ENCODE measurements at regions of chrX and their contacts with region 1.

Region 1: DNA sequence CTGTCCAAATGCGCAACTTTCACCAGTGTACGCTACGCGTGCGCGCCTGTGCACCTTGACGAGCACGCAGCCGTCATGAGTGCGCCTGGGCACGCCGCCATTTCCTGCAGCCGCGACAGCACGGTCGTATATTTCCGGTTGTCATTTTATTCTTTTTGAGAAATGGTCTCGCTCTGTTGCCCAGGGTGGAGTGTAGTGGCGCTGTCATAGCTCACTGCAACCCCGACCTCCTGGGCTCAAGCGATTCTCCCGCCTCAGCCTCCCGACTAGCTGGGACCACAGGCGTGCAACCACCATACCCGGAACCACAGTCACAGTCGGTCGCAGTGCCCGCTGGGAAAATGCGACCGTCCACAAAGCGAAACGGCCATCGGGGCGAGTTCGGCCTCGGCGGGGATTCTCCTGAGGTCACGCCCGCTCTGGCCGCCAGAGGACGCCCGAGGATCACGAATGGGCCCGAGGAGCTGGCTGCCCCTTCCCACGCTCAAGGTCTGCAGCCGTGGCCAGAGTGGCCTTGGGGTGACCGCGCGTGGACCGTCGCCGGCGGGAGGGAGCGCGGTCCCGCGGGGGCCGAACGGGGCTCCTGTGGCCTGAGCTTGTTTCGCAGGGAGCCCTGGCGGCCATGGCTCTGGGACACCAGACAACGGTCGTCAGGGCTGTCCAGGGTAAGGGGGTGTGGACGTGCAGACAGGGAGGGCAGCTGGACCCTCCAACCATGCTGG is 23.7 kb upstream of the PNMA3 start:
- DNase-seq: peak; percentile 73
- H3K4me3 Mint-ChIP-seq: peak overlapping the region; percentile 81
- H3K27ac Mint-ChIP-seq: peak overlapping the region; percentile 87
- H3K4me1 Mint-ChIP-seq: peaks cover 8% of the 10 kb centered on the region
- H3K27me3 Mint-ChIP-seq: no peaks in the 10 kb centered on the region

Region 2: DNA sequence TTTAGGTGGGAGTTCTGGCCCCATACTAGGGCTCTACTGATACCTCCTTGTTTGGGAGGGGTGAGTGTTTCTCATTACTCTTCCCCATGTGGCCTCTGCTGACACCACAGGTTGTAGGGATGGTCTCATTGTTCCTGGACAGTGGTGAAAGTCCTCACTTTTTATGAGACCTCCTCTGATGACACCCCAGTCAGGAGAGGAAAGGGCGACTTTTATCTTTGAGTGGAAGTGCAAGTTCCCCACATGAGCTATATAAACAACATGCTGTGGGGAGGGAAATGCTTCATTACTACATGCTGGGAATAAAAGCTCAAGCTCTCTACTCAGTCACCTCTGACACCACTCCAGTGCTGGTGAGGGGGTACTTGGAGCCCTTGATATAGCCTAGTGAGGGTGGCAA is 233.6 kb before region 1 on chrX:
- CTCF ChIA-PET with region 1: no interaction called
- intact Hi-C with region 1: no loop called
- DNase-seq: no peak
- H3K4me3 Mint-ChIP-seq: no peak overlapping the region
- H3K27ac Mint-ChIP-seq: no peak overlapping the region
- H3K4me1 Mint-ChIP-seq: no peaks in the 10 kb centered on the region
- H3K27me3 Mint-ChIP-seq: no peaks in the 10 kb centered on the region

Region 3: GRCh38 chrX:152926279-152926678 is 106.3 kb before region 1 on chrX:
- CTCF ChIA-PET with region 1: no interaction called
- intact Hi-C with region 1: no loop called
- DNase-seq: peak; percentile 70
- H3K4me3 Mint-ChIP-seq: no peak overlapping the region
- H3K27ac Mint-ChIP-seq: no peak overlapping the region
- H3K4me1 Mint-ChIP-seq: peaks cover 6% of the 10 kb centered on the region
- H3K27me3 Mint-ChIP-seq: no peaks in the 10 kb centered on the region

Region 4: GRCh38 chrX:153370293-153371055 is 337.9 kb after region 1 on chrX:
- CTCF ChIA-PET with region 1: no interaction called
- intact Hi-C with region 1: loop called (anchors 5 kb)
- DNase-seq: no peak
- H3K4me3 Mint-ChIP-seq: no peak overlapping the region
- H3K27ac Mint-ChIP-seq: no peak overlapping the region
- H3K4me1 Mint-ChIP-seq: peaks cover 11% of the 10 kb centered on the region
- H3K27me3 Mint-ChIP-seq: no peaks in the 10 kb centered on the region

Region 5: DNA sequence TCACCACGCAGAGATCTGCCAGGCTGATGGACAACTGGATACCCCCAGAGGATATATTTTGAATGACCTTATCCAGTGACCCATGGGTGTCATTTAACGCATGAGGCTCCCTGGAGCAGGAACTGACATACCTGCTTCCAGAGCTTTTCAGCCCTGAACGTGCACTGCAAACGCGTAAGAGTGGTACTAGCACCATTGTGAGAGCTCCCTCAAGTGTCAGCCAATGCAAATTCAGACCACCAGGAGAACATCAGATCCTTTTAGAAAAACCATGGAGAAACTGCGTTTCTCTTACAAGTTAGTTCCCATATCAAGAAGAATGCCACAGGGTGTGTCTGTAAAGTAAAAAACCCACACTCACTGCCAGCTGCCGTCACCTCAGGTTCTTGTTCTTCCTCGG is 406.0 kb after region 1 on chrX:
- CTCF ChIA-PET with region 1: no interaction called
- intact Hi-C with region 1: loop called (anchors 10 kb)
- DNase-seq: peak; percentile 23
- H3K4me3 Mint-ChIP-seq: no peak overlapping the region
- H3K27ac Mint-ChIP-seq: no peak overlapping the region
- H3K4me1 Mint-ChIP-seq: no peaks in the 10 kb centered on the region
- H3K27me3 Mint-ChIP-seq: no peaks in the 10 kb centered on the region

Region 6: GRCh38 chrX:153507484-153508178 is 475.1 kb after region 1 on chrX:
- CTCF ChIA-PET with region 1: interaction called, 3 read pairs
- intact Hi-C with region 1: loop called (anchors 1 kb)
- DNase-seq: peak; percentile 87
- H3K4me3 Mint-ChIP-seq: no peak overlapping the region
- H3K27ac Mint-ChIP-seq: no peak overlapping the region
- H3K4me1 Mint-ChIP-seq: peaks cover 1% of the 10 kb centered on the region
- H3K27me3 Mint-ChIP-seq: no peaks in the 10 kb centered on the region

Region 7: GRCh38 chrX:153667956-153668396 is 635.4 kb after region 1 on chrX:
- CTCF ChIA-PET with region 1: no interaction called
- intact Hi-C with region 1: loop called (anchors 10 kb)
- DNase-seq: peak; percentile 86
- H3K4me3 Mint-ChIP-seq: peak overlapping the region; percentile 70
- H3K27ac Mint-ChIP-seq: no peak overlapping the region
- H3K4me1 Mint-ChIP-seq: peaks cover 8% of the 10 kb centered on the region
- H3K27me3 Mint-ChIP-seq: peaks cover 8% of the 10 kb centered on the region

Region 8: GRCh38 chrX:153724252-153725040 is 691.9 kb after region 1 on chrX and contains the starts of genes ABCD1 and BCAP31:
- CTCF ChIA-PET with region 1: no interaction called
- intact Hi-C with region 1: no loop called
- DNase-seq: peak; percentile 88
- H3K4me3 Mint-ChIP-seq: peak within 1 kb of the TSS; percentile 85
- H3K27ac Mint-ChIP-seq: peak within 1 kb of the TSS; percentile 81
- H3K4me1 Mint-ChIP-seq: peaks cover 25% of the 10 kb centered on the region
- H3K27me3 Mint-ChIP-seq: no peaks in the 10 kb centered on the region
- total RNA-seq, gene ABCD1: 2.5 to 3.4 TPM
- total RNA-seq, gene BCAP31: 69.5 to 71.2 TPM

Measured in activated naive CD4-positive, alpha-beta T cell treated with anti-CD3 and anti-CD28 coated beads for 36 hours (primary cell).